Aorta (tissue), 5 donors: ENCODE measurements at regions of chr3 and their contacts with region 1.

Region 1: GRCh38 chr3:134473868-134474546 is 11.8 kb downstream of the ANAPC13 start:
- DNase-seq: peak; percentile 69 to 83
- ATAC-seq: peak; percentile 82
- H3K4me3 ChIP-seq: no peak overlapping the region
- H3K27ac ChIP-seq: no peak overlapping the region
- H3K4me1 ChIP-seq: no peaks in the 10 kb centered on the region
- H3K27me3 ChIP-seq: no peaks in the 10 kb centered on the region

Region 2: GRCh38 chr3:134197681-134198261 is 276.2 kb before region 1 on chr3:
- intact Hi-C with region 1: loop called in 1 of 2 experiments (anchors 5 kb)
- DNase-seq: no peak
- ATAC-seq: peak; percentile 79
- H3K4me3 ChIP-seq: no peak overlapping the region
- H3K27ac ChIP-seq: no peak overlapping the region
- H3K4me1 ChIP-seq: no peaks in the 10 kb centered on the region
- H3K27me3 ChIP-seq: no peaks in the 10 kb centered on the region

Region 3: DNA sequence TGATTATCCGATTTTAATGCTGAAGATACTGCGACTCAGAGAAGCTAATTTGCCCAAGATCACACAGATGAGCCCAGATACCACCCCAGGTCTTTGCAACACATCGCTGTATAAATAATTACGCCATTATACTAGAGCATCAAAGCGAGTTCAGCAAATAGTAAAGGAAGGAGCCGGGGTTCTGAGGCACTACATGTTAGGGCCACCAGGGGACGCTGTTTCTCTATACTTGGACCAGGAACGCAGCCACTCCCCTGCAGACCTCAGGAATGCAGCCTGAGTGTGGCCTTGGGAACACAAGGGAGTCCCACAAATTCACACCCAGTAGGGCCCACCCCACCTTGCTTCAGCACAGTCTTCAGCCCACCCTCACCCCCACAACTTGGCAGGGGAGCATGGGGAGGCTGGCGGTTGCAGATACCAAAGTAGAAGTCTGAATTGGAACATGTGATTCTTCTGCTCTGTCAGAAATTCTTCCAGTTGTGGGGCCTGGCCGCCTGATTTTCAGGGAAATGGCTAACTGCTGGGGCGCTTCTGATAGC is 165.6 kb before region 1 on chr3:
- intact Hi-C with region 1: loop called (anchors 1 to 2 kb)
- DNase-seq: peak; percentile 87 to 91
- ATAC-seq: peak; percentile 91
- H3K4me3 ChIP-seq: no peak overlapping the region
- H3K27ac ChIP-seq: peak overlapping the region; percentile 30 to 58
- H3K4me1 ChIP-seq: no peaks in the 10 kb centered on the region
- H3K27me3 ChIP-seq: no peaks in the 10 kb centered on the region